Activated T-helper 1 cell treated with anti-CD3 and anti-CD28 coated beads, Interleukin-12 subunit alpha, Interleukin-12 subunit beta, Interleukin-2, Interleukin-4 antibody, amounts not matched to agents 30 ng/mL and 10 ng/mL and 1 ng/mL, durations not matched to agents 14 hours and 24 hours and 36 hours (primary cell): ENCODE measurements at regions of chr3 and their contacts with region 1.

Region 1: DNA sequence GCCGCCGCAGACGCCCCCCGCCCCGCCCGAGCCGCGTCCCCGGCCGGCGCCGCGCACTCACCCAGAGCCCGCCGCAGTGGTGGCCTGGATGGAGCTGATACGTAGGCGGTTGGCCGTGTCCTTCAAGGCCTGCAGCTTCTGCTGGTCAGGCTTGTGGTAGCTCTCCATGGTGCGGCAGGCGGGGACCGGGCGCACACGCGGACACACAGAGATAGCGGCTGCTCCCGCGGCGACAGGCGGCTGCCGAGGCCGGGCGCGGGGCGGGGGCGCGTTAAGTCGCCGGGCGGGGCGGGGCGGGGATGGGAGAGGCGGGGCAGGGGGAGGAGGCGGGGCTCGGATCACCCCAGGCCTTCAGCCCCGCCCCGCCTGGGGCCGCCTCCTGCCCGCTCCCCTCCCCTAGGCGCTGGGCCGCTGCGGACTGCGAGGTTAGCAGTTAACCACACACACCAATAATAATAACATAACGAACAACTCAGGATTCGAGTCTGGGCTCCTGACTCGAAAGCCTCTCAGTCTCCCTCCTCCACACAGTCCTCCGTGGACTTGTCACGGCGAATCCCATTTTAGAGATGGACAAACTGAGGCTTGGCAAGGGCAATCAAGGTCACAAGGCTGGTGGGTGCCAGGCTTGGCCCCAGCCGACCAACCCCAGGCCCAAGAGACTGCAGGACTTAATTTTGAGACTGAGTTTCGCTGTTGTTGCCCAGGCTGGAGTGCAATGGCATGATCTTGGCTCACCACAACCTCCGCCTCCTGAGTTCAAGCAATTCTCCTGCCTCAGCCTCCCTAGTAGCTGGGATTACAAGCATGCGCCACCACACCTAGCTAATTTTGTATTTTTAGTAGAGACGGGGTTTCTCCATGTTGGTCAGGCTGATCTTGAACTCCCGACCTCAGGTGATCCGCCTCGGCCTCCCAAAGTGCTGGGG is at the start of gene TKT:
- DNase-seq: peak; percentile 79
- H3K4me3 Mint-ChIP-seq: peak within 1 kb of the TSS; percentile 95
- H3K27ac Mint-ChIP-seq: peak within 1 kb of the TSS; percentile 90
- H3K4me1 Mint-ChIP-seq: peaks cover 36% of the 10 kb centered on the region
- H3K27me3 Mint-ChIP-seq: peaks cover 8% of the 10 kb centered on the region
- total RNA-seq, gene TKT: 332 and 351 TPM in 2 replicates

Region 2: DNA sequence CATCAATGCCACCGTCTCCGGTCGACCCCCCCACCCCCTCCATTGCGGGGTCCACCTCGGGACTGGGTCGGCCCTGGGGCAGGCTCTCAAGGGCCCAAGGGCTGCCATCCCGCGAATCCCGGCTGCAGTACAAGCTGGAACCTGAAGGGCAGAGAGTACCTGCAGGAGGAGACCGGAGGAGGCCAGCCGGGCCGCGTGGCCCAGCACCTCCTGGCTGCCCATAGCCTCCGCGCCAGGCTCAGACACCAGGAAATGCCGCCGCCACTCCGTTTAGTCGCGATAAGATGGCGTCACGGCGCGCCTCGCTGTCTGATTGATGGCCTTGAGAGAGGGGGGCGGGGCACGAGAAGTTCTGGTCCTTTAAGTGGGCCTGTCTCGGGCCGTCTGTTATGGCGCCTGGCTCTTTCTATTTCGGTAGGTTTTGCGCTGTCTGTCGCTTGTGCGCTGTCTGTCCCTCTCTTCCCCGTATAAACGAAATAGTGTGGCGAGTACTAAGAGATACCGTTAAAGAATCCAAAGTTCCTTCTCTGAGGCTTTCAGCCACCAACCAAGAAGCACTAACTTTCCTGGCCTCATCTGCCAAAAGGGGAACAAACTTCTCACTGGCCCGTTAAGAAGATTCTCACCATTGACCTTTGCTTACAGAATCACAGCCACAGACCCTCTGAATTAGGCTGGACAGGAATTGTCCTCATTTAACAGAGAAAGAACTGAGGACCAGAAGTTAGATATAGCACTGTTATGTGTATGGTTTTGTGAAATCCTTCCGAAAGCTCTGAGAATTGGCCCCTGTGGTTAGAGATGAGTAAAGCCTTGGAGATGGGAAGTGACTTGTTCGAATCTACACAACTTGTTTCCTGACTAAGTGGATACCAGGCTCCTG is 125.6 kb before region 1 on chr3 and contains the start of gene RFT1:
- intact Hi-C with region 1: loop called (anchors 1 kb)
- DNase-seq: peak; percentile 96
- H3K4me3 Mint-ChIP-seq: peak within 1 kb of the TSS; percentile 96
- H3K27ac Mint-ChIP-seq: peak within 1 kb of the TSS; percentile 94
- H3K4me1 Mint-ChIP-seq: peaks cover 22% of the 10 kb centered on the region
- H3K27me3 Mint-ChIP-seq: no peaks in the 10 kb centered on the region
- total RNA-seq, gene RFT1: 44.9 and 46.2 TPM in 2 replicates

Region 3: GRCh38 chr3:53160660-53161449 is 95.2 kb before region 1 on chr3 and contains the start of gene PRKCD:
- intact Hi-C with region 1: loop called (anchors 1 kb)
- DNase-seq: peak; percentile 67
- H3K4me3 Mint-ChIP-seq: peak within 1 kb of the TSS; percentile 89
- H3K27ac Mint-ChIP-seq: peak within 1 kb of the TSS; percentile 89
- H3K4me1 Mint-ChIP-seq: peaks cover 32% of the 10 kb centered on the region
- H3K27me3 Mint-ChIP-seq: peaks cover 18% of the 10 kb centered on the region
- total RNA-seq, gene PRKCD: 24.8 and 28.0 TPM in 2 replicates

Region 4: DNA sequence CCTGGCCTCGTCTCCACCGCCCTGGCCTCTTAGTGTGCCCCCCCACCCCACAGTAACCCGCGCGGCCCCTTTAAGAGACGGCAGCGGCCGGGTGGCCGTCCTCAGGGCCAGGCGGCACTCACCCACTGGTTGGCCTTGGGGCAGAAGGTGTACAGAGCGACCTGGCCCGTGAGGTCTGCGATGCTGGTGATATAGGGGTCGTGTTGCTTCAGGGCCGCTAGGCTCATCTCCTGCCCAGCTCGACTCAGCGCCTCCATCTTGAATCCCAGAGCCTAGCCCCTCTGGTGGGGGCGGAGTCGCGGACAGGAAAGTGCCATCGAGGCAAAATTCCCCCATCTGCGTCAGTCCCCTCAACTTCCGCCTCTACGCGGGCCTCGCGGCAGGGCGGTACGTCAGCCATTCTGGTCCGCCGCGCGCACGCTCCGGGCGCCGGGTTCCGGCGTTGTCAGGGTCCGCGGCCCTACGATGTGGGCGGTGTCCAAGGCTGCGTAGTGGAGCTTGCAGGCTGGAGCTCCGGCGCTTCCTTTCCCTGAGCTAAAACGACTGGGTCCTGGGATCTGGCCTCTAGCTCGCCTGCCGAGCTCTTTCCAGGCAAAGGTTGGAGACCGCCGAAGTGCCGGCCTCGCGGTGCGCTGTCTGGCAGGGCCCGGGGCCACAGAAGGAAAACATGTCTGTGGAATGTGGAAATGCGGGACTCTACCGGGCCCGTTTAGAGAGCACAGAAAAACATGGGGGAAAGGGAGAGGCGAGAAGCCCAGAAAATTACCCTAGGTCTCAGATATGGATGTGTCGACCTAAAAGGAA is 91.4 kb after region 1 on chr3 and contains the start of gene DCP1A:
- intact Hi-C with region 1: loop called (anchors 1 kb)
- DNase-seq: peak; percentile 96
- H3K4me3 Mint-ChIP-seq: peak within 1 kb of the TSS; percentile 98
- H3K27ac Mint-ChIP-seq: peak within 1 kb of the TSS; percentile 98
- H3K4me1 Mint-ChIP-seq: peaks cover 37% of the 10 kb centered on the region
- H3K27me3 Mint-ChIP-seq: no peaks in the 10 kb centered on the region
- total RNA-seq, gene DCP1A: 46.3 and 48.6 TPM in 2 replicates

Region 5: GRCh38 chr3:53891497-53892285 is 635.7 kb after region 1 on chr3 and contains the start of gene SELENOK:
- intact Hi-C with region 1: loop called (anchors 5 kb)
- DNase-seq: peak; percentile 98
- H3K4me3 Mint-ChIP-seq: peak within 1 kb of the TSS; percentile 98
- H3K27ac Mint-ChIP-seq: peak within 1 kb of the TSS; percentile 99
- H3K4me1 Mint-ChIP-seq: peaks cover 62% of the 10 kb centered on the region
- H3K27me3 Mint-ChIP-seq: peaks cover 27% of the 10 kb centered on the region
- total RNA-seq, gene SELENOK: 56.4 and 57.2 TPM in 2 replicates